Activated T-helper 2 cell treated with anti-CD3 and anti-CD28 coated beads, Interferon-gamma antibody, Interleukin-2, Interleukin-4, amounts not matched to agents 10 μg/mL and 5 μg/mL and 100 μg/mL, durations not matched to agents 14 hours and 24 hours and 36 hours (primary cell): ENCODE measurements at regions of chr1 and their contacts with region 1.

Region 1: GRCh38 chr1:170929835-170930554 is 5.3 kb upstream of the MROH9 start:
- DNase-seq: no peak
- H3K4me3 Mint-ChIP-seq: no peak overlapping the region
- H3K27ac Mint-ChIP-seq: no peak overlapping the region
- H3K4me1 Mint-ChIP-seq: no peaks in the 10 kb centered on the region
- H3K27me3 Mint-ChIP-seq: no peaks in the 10 kb centered on the region

Region 2: DNA sequence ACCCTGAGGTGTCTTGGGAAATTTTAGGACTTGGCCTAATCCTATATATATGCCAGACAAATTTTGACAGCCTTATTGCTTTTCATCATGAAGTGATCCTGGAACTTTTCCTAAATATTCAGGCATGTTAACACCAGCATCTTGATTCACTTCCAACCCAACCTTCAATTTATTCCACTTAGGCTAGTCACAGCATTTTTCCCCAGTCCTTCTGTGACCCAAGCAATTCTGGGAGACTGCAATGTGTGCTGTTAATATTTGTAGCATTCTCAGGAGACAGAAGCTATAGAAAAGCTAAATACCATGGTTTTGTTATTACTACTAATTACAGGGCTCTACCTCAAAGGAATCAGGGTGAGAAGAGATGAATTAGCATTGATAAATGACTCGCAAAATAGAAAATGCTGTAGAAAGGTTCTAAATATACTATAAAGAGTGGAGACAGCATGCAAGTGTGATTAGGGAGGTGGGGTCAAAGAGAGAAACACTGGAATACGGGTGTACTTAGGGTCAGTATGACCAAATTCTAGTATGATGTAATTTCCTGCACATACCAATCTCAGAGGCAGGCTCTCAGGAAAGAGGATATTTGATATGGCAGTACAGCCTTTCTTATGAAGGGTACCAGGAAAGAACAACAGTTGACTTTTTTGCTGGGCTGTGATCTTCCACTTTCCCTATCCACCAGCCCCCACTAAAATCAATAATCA is 237.0 kb before region 1 on chr1:
- intact Hi-C with region 1: loop called (anchors 5 kb)
- DNase-seq: no peak
- H3K4me3 Mint-ChIP-seq: no peak overlapping the region
- H3K27ac Mint-ChIP-seq: no peak overlapping the region
- H3K4me1 Mint-ChIP-seq: peaks cover 4% of the 10 kb centered on the region
- H3K27me3 Mint-ChIP-seq: peaks cover 7% of the 10 kb centered on the region